Activated CD4-positive, alpha-beta T cell treated with anti-CD3 and anti-CD28 coated beads for 36 hours (primary cell): ENCODE measurements at regions of chr12 and their contacts with region 1.

Region 1: GRCh38 chr12:27710592-27711316 is at the start of gene MRPS35:
- DNase-seq: peak; percentile 95
- ATAC-seq: peak; percentile 98
- H3K4me3 Mint-ChIP-seq: peak within 1 kb of the TSS; percentile 94
- H3K27ac Mint-ChIP-seq: peak within 1 kb of the TSS; percentile 94
- H3K4me1 Mint-ChIP-seq: peaks cover 28% of the 10 kb centered on the region
- H3K27me3 Mint-ChIP-seq: no peaks in the 10 kb centered on the region
- total RNA-seq, gene MRPS35: 58.5 to 62.1 TPM

Region 2: GRCh38 chr12:27779920-27780611 is 69.3 kb after region 1 on chr12 and contains the starts of genes KLHL42 and MANSC4:
- CTCF ChIA-PET with region 1: no interaction called
- POLR2A ChIA-PET with region 1: no interaction called
- intact Hi-C with region 1: loop called (anchors 2 kb)
- DNase-seq: peak; percentile 80
- ATAC-seq: peak; percentile 86
- H3K4me3 Mint-ChIP-seq: peak within 1 kb of the TSS; percentile 80
- H3K27ac Mint-ChIP-seq: peak within 1 kb of the TSS; percentile 83
- H3K4me1 Mint-ChIP-seq: peaks cover 34% of the 10 kb centered on the region
- H3K27me3 Mint-ChIP-seq: no peaks in the 10 kb centered on the region
- total RNA-seq, gene KLHL42: 7.1 to 9.2 TPM
- total RNA-seq, gene MANSC4: not detected